PC-3 (cell line): ENCODE measurements at regions of chr15 and their contacts with region 1.

Region 1: GRCh38 chr15:84734794-84735479 is 13.5 kb upstream of the ZNF592 start:
- DNase-seq: peak; percentile 88
- ATAC-seq: peak; percentile 84
- H3K4me3 ChIP-seq: peak overlapping the region; percentile 55; the same call in 1 of the 2 replicates
- H3K27ac ChIP-seq: peak overlapping the region; percentile 91
- H3K4me1 ChIP-seq: peaks cover 24% of the 10 kb centered on the region
- H3K27me3 ChIP-seq: no peaks in the 10 kb centered on the region
- CTCF ChIP-seq: no peak

Region 2: DNA sequence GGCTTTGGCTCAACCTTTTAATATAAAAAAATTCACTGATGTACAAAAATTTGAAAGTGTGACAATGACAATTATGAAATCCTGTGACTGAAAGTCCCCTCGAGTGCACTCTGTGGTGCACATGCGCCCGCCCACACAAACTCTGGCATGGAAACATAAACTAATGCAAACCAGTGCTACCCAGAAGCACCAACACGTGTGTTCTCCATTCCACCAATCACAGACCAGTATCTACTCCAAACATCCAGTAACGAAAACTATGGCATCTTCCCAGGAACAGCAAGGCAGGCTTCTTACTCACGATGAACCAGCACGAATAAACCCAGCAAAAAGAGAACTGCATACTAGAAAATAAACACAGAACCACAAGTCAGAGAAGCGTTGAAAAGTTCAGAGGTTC is 65.2 kb before region 1 on chr15:
- CTCF ChIA-PET with region 1: interaction called, 4 read pairs
- POLR2A ChIA-PET with region 1: interaction called, 16 read pairs
- intact Hi-C with region 1: no loop called
- DNase-seq: no peak
- ATAC-seq: no peak
- H3K4me3 ChIP-seq: no peak overlapping the region
- H3K27ac ChIP-seq: peak overlapping the region; percentile 42
- H3K4me1 ChIP-seq: peaks cover 13% of the 10 kb centered on the region
- H3K27me3 ChIP-seq: no peaks in the 10 kb centered on the region
- CTCF ChIP-seq: no peak

Region 3: DNA sequence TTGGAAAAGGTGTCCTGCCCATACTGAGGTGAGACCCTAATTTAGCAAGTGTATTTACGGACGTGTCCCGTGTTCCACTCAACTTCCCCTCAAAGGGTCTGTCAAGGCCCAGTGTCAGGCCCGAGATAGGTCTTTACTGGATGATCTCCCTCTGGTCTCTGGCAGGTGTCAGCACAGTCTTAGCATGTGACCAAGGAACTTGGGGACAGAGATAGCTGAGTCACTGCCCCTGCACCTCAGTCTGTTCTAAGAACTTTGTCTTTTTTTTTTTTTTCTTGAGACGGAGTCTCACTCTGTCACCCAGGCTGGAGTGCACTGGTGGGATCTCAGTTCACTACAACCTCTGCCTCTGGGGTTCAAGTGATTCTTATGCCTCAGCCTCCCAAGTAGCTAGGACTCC is 50.1 kb after region 1 on chr15:
- CTCF ChIA-PET with region 1: no interaction called
- POLR2A ChIA-PET with region 1: no interaction called
- intact Hi-C with region 1: no loop called
- DNase-seq: no peak
- ATAC-seq: no peak
- H3K4me3 ChIP-seq: no peak overlapping the region
- H3K27ac ChIP-seq: no peak overlapping the region
- H3K4me1 ChIP-seq: no peaks in the 10 kb centered on the region
- H3K27me3 ChIP-seq: no peaks in the 10 kb centered on the region
- CTCF ChIP-seq: no peak